ENCODE measurements at regions of chr1 and their contacts with region 1.

Region 1: DNA sequence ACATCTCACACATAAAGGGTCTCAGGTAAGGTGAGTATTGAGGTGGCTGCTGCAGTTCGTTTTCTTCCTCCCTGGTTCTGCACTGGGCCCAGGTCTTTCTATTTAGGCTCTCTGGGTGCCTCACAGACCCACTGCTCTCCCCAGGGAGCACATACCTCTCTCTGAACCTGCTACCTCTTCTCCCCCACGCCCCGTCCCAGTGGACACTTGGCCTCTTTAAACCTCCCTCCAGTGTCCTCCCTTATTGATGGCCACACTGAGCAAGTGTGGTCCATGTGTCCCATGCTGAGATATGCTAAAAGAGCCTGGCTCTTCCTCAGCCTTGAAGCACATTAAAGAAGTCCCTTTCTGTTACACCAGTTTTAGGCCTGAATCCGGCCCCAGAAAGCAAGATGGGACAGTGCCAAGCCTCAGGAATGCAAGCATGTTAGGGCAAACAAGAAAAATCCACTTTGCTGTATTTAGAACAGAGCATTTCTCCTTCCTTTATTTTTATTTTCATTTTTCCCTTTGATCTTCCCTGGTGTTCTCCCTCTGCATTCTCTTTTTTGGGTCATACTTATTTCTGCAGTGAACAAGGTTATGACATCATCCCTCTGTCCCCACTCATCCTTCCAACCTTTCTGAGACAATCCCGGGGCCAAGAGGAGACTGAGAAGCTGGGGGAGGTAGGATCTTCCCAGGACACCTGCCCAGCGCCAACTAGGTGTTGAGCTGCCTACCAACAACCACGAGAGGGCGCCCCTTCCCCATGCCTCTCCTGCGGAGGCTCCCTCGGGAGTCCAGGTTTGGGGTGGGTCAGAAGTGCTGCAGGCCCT is 5.0 kb upstream of the CHI3L2 start:
- DNase-seq: peak; percentile 89
- H3K4me3 ChIP-seq: peak overlapping the region; percentile 53
- H3K27ac ChIP-seq: peak overlapping the region; percentile 97
- H3K4me1 ChIP-seq: peaks cover 84% of the 10 kb centered on the region
- CTCF ChIP-seq: peak; percentile 99

Region 2: GRCh38 chr1:110538075-110538474 is 684.4 kb before region 1 on chr1:
- CTCF ChIA-PET with region 1: no interaction called
- POLR2A ChIA-PET with region 1: no interaction called
- intact Hi-C with region 1: no loop called
- DNase-seq: no peak
- H3K4me3 ChIP-seq: no peak overlapping the region
- H3K27ac ChIP-seq: no peak overlapping the region
- H3K4me1 ChIP-seq: no peaks in the 10 kb centered on the region
- CTCF ChIP-seq: no peak

Region 3: DNA sequence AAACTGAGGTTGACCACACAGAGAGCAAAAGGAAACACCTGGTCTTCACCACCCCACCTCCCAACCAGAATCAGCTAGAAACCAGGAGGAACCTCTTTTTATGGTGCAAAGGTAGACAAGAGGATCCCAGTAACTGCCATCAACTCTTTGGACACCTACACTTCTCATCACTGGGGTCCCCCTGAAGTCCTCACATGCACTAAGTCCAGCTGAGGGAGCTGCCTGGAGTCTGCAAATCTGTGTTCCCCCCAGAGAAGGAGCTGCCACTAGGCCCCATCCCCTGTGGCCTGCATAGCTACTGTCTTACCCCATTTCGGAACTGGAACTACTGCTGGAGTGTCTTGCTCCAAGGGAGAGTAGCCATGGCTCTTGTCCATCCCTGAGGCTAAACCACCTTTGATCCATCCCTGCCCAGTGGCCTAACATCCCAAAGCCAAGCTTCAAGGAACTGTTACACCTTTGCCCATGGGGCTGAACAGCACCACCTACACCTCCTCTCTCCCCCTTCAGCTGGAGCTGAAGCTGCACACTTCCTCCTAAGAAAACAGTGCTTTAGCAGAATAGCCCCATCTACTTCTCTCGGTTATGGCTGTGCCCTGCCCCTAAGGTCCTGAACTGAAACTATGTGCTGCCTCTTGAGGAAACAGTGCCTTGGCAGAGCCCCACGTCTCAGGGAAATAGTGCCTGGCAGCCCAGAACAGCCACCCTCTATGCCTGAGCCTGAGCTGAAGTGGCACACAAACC is 435.0 kb before region 1 on chr1:
- CTCF ChIA-PET with region 1: no interaction called
- POLR2A ChIA-PET with region 1: interaction called, 4 read pairs
- intact Hi-C with region 1: loop called (anchors 5 kb)
- DNase-seq: peak; percentile 82
- H3K4me3 ChIP-seq: peak overlapping the region; percentile 47
- H3K27ac ChIP-seq: peak overlapping the region; percentile 80
- H3K4me1 ChIP-seq: peaks cover 30% of the 10 kb centered on the region
- CTCF ChIP-seq: peak; percentile 37; the same call in 1 of the 2 replicates

Region 4: GRCh38 chr1:111099289-111099688 is 123.2 kb before region 1 on chr1:
- CTCF ChIA-PET with region 1: no interaction called
- POLR2A ChIA-PET with region 1: no interaction called
- intact Hi-C with region 1: no loop called
- DNase-seq: peak; percentile 63
- H3K4me3 ChIP-seq: no peak overlapping the region
- H3K27ac ChIP-seq: no peak overlapping the region
- H3K4me1 ChIP-seq: no peaks in the 10 kb centered on the region
- CTCF ChIP-seq: no peak

Region 5: DNA sequence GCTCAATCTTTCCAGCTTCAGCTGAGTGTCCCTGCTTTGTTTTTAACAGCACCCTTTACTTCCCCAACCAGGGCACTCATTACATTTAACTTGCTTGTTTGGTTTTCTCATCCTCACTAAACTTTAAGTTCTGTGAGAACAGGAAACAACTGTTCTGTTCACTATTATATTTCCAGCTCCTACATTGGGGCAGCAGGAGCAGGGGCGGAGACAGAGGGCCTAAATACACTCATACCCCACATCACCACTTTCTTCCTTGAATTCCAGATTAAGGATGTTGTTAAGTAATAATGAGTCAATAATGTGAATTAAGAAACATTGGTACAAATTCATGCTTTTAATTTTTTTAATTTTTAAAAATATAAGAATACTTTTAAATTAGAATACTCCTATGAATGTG is 88.7 kb before region 1 on chr1:
- CTCF ChIA-PET with region 1: interaction called, 4 read pairs
- POLR2A ChIA-PET with region 1: interaction called, 114 read pairs
- intact Hi-C with region 1: no loop called
- DNase-seq: no peak
- H3K4me3 ChIP-seq: no peak overlapping the region
- H3K27ac ChIP-seq: peak overlapping the region; percentile 98
- H3K4me1 ChIP-seq: peaks cover 83% of the 10 kb centered on the region
- CTCF ChIP-seq: no peak

Region 6: GRCh38 chr1:111203681-111204200 is 18.8 kb before region 1 on chr1:
- CTCF ChIA-PET with region 1: no interaction called
- POLR2A ChIA-PET with region 1: interaction called, 19 read pairs
- intact Hi-C with region 1: loop called (anchors 2 kb)
- DNase-seq: peak; percentile 93
- H3K4me3 ChIP-seq: peak overlapping the region; percentile 70
- H3K27ac ChIP-seq: peak overlapping the region; percentile 67
- H3K4me1 ChIP-seq: peaks cover 72% of the 10 kb centered on the region
- CTCF ChIP-seq: no peak

Region 7: GRCh38 chr1:111237821-111238795 is 15.6 kb after region 1 on chr1:
- CTCF ChIA-PET with region 1: no interaction called
- POLR2A ChIA-PET with region 1: no interaction called
- intact Hi-C with region 1: no loop called
- DNase-seq: no peak
- H3K4me3 ChIP-seq: no peak overlapping the region
- H3K27ac ChIP-seq: no peak overlapping the region
- H3K4me1 ChIP-seq: no peaks in the 10 kb centered on the region
- CTCF ChIP-seq: no peak

Region 8: GRCh38 chr1:111406321-111406768 is 183.8 kb after region 1 on chr1:
- CTCF ChIA-PET with region 1: interaction called, 4 read pairs
- POLR2A ChIA-PET with region 1: interaction called, 25 read pairs
- intact Hi-C with region 1: no loop called
- DNase-seq: peak; percentile 97
- H3K4me3 ChIP-seq: peak overlapping the region; percentile 46
- H3K27ac ChIP-seq: peak overlapping the region; percentile 94
- H3K4me1 ChIP-seq: peaks cover 61% of the 10 kb centered on the region
- CTCF ChIP-seq: no peak

Region 9: GRCh38 chr1:111619635-111620440 is 397.3 kb after region 1 on chr1 and contains the start of gene RAP1A:
- CTCF ChIA-PET with region 1: no interaction called
- POLR2A ChIA-PET with region 1: no interaction called
- intact Hi-C with region 1: loop called (anchors 10 kb)
- DNase-seq: peak; percentile 92
- H3K4me3 ChIP-seq: peak within 1 kb of the TSS; percentile 94
- H3K27ac ChIP-seq: peak within 1 kb of the TSS; percentile 53
- H3K4me1 ChIP-seq: peaks cover 79% of the 10 kb centered on the region
- CTCF ChIP-seq: no peak
- total RNA-seq, gene RAP1A: 8.5 and 10.4 TPM in 2 replicates

Region 10: GRCh38 chr1:111895469-111896082 is 673.1 kb after region 1 on chr1:
- CTCF ChIA-PET with region 1: no interaction called
- POLR2A ChIA-PET with region 1: no interaction called
- intact Hi-C with region 1: no loop called
- DNase-seq: no peak
- H3K4me3 ChIP-seq: no peak overlapping the region
- H3K27ac ChIP-seq: no peak overlapping the region
- H3K4me1 ChIP-seq: no peaks in the 10 kb centered on the region
- CTCF ChIP-seq: no peak